H1 (cell line): ENCODE measurements at regions of chr12 and their contacts with region 1.

Region 1: DNA sequence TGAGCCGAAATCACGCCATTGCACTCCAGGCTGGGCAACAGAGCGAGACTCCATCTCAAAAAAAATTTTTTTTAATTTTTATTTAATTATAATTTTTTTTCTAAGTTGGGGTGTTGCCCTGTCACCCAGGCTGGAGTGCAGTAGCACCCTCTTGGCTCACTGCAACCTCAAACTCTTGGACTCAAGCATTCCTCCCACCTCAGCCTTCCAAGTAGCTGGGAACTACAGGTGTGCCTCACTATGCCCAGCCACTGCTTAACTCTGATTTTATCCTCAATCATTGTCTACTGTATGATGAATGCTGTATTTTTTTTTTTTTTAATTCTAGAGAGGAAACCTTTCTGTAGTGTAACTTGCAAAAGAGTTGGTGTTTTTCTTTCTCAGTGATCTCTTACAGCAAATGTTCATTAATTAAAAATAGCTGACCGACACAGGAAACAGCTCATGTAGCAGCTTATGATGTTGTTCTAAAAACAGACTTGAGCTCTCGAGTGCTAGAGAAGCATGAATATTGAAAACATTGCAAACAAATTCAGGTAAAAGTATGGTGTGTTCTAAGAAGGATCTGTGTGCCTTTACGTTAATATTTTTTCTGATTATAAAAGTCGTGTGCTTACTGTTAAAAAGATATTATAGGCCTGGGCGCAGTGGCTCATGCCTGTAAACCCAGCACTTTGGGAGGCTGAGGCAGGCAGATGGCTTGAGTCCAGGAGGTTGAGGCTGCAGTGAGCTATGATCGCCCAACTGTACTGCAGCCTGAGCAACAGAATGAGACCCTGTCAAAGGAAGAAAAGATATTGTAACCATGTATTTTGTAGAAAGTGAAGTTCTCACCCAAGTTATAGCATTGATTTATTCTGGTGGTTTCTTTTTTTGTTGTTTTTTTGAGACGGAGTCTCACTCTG is 68.9 kb downstream of the FGD4 start:
- DNase-seq: no peak
- H3K4me3 ChIP-seq: no peak overlapping the region
- H3K27ac ChIP-seq: no peak overlapping the region
- H3K4me1 ChIP-seq: no peaks in the 10 kb centered on the region
- H3K27me3 ChIP-seq: no peaks in the 10 kb centered on the region
- CTCF ChIP-seq: no peak
- EP300 ChIP-seq: no peak
- POLR2A ChIP-seq: no peak
- RAD21 ChIP-seq: no peak

Region 2: DNA sequence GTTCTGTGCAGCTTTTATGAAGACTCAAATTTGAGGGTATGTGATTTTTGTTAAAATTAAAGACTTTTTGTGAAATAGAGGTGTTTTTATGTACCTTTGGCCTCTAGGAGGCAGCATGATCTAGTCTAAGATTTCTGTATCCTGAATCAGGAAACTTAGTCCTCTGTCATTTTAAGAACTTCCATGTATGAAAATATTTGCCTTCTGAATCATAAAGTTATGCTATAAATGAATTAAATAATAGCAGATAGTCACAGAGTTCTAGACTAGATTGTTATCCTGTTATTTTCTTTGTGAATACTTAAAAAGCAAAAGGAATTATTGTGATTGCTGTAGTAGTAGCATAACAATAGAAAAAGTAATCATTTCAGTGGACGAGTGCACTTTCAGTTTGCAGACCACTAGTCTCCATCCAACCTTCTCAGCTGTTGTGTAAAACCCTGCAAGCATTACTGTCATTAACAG is 12.6 kb before region 1 on chr12:
- CTCF ChIA-PET with region 1: interaction called, 13 read pairs
- POLR2A ChIA-PET with region 1: interaction called, 15 read pairs
- DNase-seq: no peak
- H3K4me3 ChIP-seq: peak overlapping the region in 1 of 4 experiments; percentile 50; a peak in 2 of 8 replicates
- H3K27ac ChIP-seq: peak overlapping the region; percentile 57; the same call in 1 of the 2 replicates
- H3K4me1 ChIP-seq: peaks cover 2 to 21% (median 11%) of the 10 kb centered on the region in 4 experiments
- H3K27me3 ChIP-seq: no peaks in the 10 kb centered on the region
- CTCF ChIP-seq: peak in 2 of 3 experiments; percentile 28 to 55; a peak in 2 of 4 replicates
- EP300 ChIP-seq: no peak
- POLR2A ChIP-seq: no peak
- RAD21 ChIP-seq: peak; percentile 57 to 72

Region 3: GRCh38 chr12:32478858-32479725 is 10.9 kb after region 1 on chr12:
- CTCF ChIA-PET with region 1: no interaction called
- POLR2A ChIA-PET with region 1: interaction called, 19 read pairs
- DNase-seq: no peak
- H3K4me3 ChIP-seq: no peak overlapping the region
- H3K27ac ChIP-seq: no peak overlapping the region
- H3K4me1 ChIP-seq: no peaks in the 10 kb centered on the region; a peak in 2 of 7 replicates
- H3K27me3 ChIP-seq: no peaks in the 10 kb centered on the region
- CTCF ChIP-seq: no peak
- EP300 ChIP-seq: no peak
- POLR2A ChIP-seq: no peak
- RAD21 ChIP-seq: no peak